ENCODE measurements at regions of chr4 and their contacts with region 1.

Region 1: GRCh38 chr4:91123742-91124141 is 996.5 kb downstream of the CCSER1 start:
- DNase-seq: no peak
- H3K4me3 ChIP-seq: no peak overlapping the region
- H3K27ac ChIP-seq: no peak overlapping the region
- H3K4me1 ChIP-seq: no peaks in the 10 kb centered on the region
- H3K27me3 ChIP-seq: no peaks in the 10 kb centered on the region
- CTCF ChIP-seq: no peak
- EP300 ChIP-seq: no peak
- POLR2A ChIP-seq: no peak

Region 2: GRCh38 chr4:90786602-90787001 is 337.1 kb before region 1 on chr4:
- in situ Hi-C with region 1: no loop called
- intact Hi-C with region 1: no loop called
- DNase-seq: no peak
- H3K4me3 ChIP-seq: no peak overlapping the region
- H3K27ac ChIP-seq: no peak overlapping the region
- H3K4me1 ChIP-seq: no peaks in the 10 kb centered on the region
- H3K27me3 ChIP-seq: no peaks in the 10 kb centered on the region
- CTCF ChIP-seq: no peak
- EP300 ChIP-seq: no peak
- POLR2A ChIP-seq: no peak

Region 3: GRCh38 chr4:91653067-91653466 is 529.3 kb after region 1 on chr4:
- in situ Hi-C with region 1: no loop called
- intact Hi-C with region 1: loop called (anchors 5 kb)
- DNase-seq: no peak
- H3K4me3 ChIP-seq: no peak overlapping the region
- H3K27ac ChIP-seq: no peak overlapping the region
- H3K4me1 ChIP-seq: no peaks in the 10 kb centered on the region
- H3K27me3 ChIP-seq: no peaks in the 10 kb centered on the region
- CTCF ChIP-seq: no peak
- EP300 ChIP-seq: no peak
- POLR2A ChIP-seq: no peak